Ascending aorta (tissue), 2 donors: ENCODE measurements at regions of chr2 and their contacts with region 1.

Region 1: DNA sequence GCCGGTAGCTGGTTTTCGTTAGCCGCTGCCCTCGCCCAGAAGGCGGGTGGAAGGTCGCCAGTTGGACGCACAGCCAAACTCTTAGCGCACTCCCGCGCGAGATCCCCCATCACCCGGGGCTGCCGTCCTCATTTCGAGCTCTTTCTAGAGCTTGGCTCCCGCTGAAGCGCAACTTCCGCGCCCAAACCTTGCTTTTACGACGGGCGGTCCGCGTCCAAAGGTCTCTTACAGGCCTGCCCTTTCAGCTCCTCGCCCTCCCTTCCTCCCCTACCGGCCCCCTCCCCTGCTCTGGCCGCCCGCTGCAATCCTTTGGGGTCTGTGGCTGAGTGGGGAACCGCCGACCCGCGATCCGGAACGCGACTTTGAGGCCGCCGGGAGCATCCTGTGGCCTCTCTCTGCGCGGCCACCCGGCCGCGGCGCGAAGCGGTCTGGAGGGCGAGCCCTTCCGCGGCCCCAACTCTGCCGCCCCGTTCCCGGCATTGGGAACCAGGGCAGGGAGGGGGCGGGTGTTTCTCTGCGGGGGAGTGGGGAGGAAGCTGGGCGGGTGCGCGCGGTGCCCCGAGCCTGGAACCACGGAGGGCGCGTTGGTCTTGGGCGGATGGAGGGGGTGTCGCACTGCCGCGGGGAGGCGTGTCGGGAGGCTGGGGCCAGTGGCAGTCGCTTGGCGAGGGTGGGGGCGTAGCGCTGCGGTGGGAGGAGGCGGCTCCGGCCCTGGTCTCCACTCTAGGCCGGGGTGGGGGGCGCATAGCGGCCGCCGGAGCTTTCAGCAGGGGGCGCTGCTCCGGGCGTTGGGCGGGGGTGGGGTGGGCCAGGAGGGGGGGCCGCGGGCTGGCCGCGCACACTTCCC is at the start of gene GDF7:
- DNase-seq: peak; percentile 69 to 94
- H3K4me3 ChIP-seq: peak within 1 kb of the TSS; percentile 63 to 72
- H3K27ac ChIP-seq: peak within 1 kb of the TSS; percentile 95 to 96
- H3K4me1 ChIP-seq: peaks cover 3 to 20% of the 10 kb centered on the region in 2 donors
- H3K27me3 ChIP-seq: no peaks in the 10 kb centered on the region
- CTCF ChIP-seq: peak in 2 of 3 experiments; percentile 53 to 71
- total RNA-seq, gene GDF7: 11.6 TPM

Region 2: DNA sequence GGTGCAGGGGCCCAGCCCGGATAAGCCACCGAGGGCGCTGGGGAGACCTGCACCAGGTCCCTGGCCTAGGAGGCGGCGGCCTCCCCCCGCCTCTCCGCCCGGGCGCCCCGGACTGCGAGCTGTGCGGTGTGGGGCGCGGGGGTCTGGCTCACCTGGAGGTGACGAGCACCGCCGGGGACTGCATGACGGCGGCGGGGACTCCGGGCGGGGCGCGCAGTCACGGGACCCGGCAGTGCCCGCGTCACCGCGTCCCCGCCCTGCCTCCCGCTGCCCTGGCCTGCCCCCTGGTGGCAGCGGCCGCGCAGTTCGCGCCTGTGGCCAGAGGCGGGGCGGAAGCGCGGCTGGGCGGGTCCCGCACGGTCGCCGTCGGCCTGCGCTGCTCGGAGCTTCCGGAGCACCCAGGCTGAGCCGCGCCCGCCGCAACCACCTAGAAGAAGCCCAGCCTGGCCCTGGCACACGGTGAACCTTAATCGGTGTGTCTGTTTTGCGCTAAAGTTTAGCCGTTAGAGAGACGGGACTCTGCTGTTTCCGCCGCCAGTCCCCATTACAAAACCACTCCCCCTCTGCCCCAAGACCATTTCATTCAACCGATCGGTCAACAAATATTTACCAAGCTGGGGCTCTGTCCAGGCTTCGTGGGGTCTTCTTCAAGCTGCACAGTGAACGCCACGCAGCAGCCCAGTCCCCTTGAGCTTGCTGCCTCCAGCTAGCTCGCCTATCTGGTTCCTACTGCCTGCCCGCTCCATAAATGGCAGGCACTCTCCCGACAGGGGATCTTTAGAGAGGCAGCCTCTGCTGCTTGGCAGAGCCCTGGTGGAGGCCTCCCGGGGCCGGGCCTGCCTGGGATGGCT is 15.4 kb before region 1 on chr2 and contains the start of gene HS1BP3:
- intact Hi-C with region 1: loop called (anchors 1 kb)
- DNase-seq: peak in 1 of 2 donors; percentile 92
- H3K4me3 ChIP-seq: peak within 1 kb of the TSS; percentile 69 to 100
- H3K27ac ChIP-seq: peak within 1 kb of the TSS; percentile 83 to 95
- H3K4me1 ChIP-seq: peaks cover 20 to 33% of the 10 kb centered on the region in 2 donors
- H3K27me3 ChIP-seq: no peaks in the 10 kb centered on the region
- CTCF ChIP-seq: peak; percentile 20 to 100 (median 64)
- total RNA-seq, gene HS1BP3: 40.0 TPM

Region 3: DNA sequence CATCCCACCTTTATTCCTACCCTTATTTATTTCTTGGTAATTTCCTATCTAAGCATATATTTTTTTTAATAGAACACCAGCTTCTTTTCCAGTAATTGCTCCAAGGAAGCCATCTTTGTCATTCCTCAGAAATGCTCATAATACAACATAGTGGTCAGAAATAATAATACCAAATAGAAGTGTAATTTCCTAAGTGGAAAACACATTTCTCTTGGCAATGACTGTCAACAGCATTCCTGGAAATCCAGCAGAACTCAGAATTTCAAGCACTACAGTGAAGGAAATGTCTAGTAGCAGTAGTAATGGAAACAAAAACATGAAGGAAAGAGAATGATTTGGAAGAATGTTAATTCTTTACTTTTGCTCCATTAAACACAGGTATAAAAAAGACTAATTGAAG is 57.0 kb after region 1 on chr2:
- intact Hi-C with region 1: loop called (anchors 5 kb)
- DNase-seq: no peak
- H3K4me3 ChIP-seq: no peak overlapping the region
- H3K27ac ChIP-seq: peak overlapping the region; percentile 84 to 87
- H3K4me1 ChIP-seq: peaks cover 9 to 39% of the 10 kb centered on the region in 2 donors
- H3K27me3 ChIP-seq: no peaks in the 10 kb centered on the region
- CTCF ChIP-seq: no peak

Region 4: DNA sequence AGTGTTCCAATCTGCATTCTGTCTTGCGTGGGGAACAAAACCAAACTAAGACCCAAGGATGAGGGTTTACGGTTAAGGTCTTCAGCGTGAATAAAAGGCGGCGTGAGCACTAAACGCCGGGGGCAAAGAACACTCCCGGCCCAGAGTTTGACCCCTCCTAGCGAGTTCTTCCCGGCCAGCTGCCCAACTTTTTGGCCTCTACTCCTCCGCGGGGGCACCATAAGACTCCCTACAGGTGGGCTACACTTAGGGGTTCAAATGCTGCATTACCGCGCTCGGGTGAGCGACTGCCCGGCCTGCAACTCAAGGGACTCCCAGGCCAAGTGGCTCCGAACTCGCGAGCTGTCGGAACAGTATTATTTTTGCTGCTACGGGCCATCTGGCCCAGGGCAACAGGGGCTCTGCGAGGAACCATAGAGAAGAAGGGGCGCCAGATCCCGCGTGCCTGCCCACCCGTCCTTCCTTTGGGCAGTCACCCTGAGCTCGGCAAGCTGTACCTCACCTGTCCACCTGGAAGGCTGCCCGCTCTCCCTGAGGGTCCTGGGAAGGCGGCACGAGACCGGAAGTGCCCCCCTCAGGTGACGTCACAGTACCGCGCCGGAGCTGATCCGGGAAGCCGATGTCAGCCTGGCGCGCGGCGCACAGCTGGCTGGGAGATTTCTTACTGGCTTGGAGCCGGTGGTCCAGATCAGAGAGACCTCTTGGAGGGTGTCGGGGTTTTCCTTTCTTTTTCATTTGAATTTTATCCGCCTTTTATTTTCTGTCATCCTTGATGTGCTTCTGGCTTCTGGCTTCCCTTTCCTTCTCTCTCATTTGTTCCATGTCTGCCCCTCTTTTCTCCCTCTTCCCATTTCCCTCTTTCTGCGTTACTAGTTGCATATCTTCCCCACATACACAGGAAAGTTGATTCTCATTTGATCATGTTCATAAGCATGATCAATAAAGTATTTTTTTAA is 156.3 kb after region 1 on chr2 and contains the start of gene LDAH:
- intact Hi-C with region 1: loop called (anchors 2 kb)
- DNase-seq: peak; percentile 66 to 95
- H3K4me3 ChIP-seq: peak within 1 kb of the TSS; percentile 92 to 97
- H3K27ac ChIP-seq: peak within 1 kb of the TSS; percentile 96 to 97
- H3K4me1 ChIP-seq: peaks cover 0 to 3% of the 10 kb centered on the region in 2 donors
- H3K27me3 ChIP-seq: no peaks in the 10 kb centered on the region
- CTCF ChIP-seq: no peak
- total RNA-seq, gene LDAH: 15.6 TPM